CD8-positive, alpha-beta memory T cell (primary cell): ENCODE measurements at regions of chr4 and their contacts with region 1.

Region 1: GRCh38 chr4:1346781-1347409 is at the start of gene UVSSA:
- DNase-seq: peak; percentile 100
- H3K4me3 ChIP-seq: peak within 1 kb of the TSS; percentile 82
- H3K4me3 Mint-ChIP-seq: peak within 1 kb of the TSS; percentile 89 to 96 (median 95)
- H3K27ac ChIP-seq: peak within 1 kb of the TSS; percentile 90
- H3K27ac Mint-ChIP-seq: peak within 1 kb of the TSS; percentile 87 to 98 (median 96)
- H3K4me1 ChIP-seq: peaks cover 24% of the 10 kb centered on the region
- H3K4me1 Mint-ChIP-seq: peaks cover 37 to 53% (median 43%) of the 10 kb centered on the region in 3 donors
- H3K27me3 ChIP-seq: no peaks in the 10 kb centered on the region
- H3K27me3 Mint-ChIP-seq: peaks cover 0 to 2% of the 10 kb centered on the region in 2 donors
- total RNA-seq, gene UVSSA: 16.8 to 19.0 TPM

Region 2: DNA sequence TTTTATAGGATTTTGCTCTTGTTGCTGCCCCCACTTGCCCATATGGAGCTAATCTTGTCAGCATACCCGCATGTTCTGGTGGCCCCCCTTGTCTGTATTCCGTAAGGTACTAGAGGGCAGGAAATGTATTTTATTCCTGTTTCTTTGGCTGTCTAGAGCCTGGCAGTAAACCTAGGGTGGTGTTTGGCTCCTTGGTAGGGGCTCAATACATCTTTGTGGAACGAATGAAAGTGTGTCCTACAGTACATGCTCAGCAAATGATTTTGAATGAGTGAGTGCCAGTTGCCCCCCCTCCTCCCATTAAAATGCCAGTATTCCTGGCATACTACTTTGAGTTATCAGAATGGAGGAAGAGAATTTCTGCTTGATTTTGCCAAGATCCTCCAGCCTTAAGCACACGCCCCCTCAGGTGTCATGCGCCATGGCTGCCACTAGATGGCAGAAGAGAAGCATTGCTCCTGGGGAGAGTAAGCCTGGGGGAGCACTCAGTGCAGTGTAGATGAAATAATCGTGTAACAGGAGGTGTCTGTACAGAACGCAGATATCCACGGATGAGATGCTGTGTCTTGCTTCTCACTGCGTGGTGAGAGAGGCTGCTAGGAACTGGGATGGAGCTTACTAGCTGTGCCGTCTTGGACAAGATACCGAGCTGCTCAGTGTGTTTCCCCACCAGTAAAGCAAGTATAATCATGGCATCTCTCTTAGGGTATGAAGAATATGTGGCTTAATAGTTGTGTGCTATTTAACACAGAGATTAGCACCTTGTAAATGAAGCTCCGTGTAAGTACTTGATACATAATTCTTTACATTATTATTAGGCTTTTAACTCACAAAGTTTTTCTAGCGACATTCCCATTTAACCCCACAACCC is 216.3 kb before region 1 on chr4:
- CTCF ChIA-PET with region 1: interaction called, 20 read pairs
- POLR2A ChIA-PET with region 1: interaction called, 3 read pairs
- DNase-seq: peak; percentile 56 to 82 (median 70)
- H3K4me3 ChIP-seq: no peak overlapping the region
- H3K4me3 Mint-ChIP-seq: no peak overlapping the region
- H3K27ac ChIP-seq: no peak overlapping the region
- H3K27ac Mint-ChIP-seq: peak overlapping the region in 1 of 8 donors; percentile 75
- H3K4me1 ChIP-seq: peaks cover 4% of the 10 kb centered on the region
- H3K4me1 Mint-ChIP-seq: peaks cover 3 to 5% (median 5%) of the 10 kb centered on the region in 3 donors
- H3K27me3 ChIP-seq: no peaks in the 10 kb centered on the region
- H3K27me3 Mint-ChIP-seq: peaks cover 6 to 13% of the 10 kb centered on the region in 2 donors

Region 3: DNA sequence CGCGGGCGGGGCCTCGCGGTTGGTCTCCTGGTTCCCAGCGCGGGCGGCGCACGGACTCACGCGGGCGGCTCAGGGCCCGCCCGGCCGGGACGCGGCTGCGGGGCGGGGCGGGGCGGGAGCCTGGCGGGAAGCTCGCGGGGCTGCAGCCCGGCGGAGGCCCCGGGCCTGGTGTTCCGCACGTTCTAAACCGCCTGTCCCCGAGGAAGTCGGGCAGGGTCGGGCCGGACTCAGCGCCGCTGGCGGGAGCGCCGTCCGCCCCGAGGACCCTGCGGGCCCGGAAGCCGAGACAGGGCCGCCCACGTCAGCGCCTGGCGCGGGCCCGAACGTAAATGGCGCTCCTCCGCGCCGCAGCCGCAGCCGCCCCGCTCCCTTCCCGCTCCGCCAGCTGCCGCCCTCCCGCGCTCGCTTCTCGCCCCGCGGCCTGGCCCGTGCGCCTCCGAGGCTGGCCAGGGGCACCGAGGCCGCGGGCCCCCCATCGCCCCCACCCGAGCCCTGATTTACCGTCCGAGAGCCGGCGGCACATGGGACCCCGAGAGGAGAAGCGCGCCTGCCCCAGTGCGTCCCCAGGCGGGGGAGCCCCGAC is 97.7 kb before region 1 on chr4:
- CTCF ChIA-PET with region 1: interaction called, 28 read pairs
- POLR2A ChIA-PET with region 1: interaction called, 59 read pairs
- DNase-seq: peak; percentile 75 to 91 (median 87)
- H3K4me3 ChIP-seq: peak overlapping the region; percentile 74
- H3K4me3 Mint-ChIP-seq: peak overlapping the region; percentile 87 to 96 (median 90)
- H3K27ac ChIP-seq: peak overlapping the region; percentile 89
- H3K27ac Mint-ChIP-seq: peak overlapping the region; percentile 92 to 99 (median 94)
- H3K4me1 ChIP-seq: peaks cover 69% of the 10 kb centered on the region
- H3K4me1 Mint-ChIP-seq: peaks cover 58 to 74% (median 63%) of the 10 kb centered on the region in 3 donors
- H3K27me3 ChIP-seq: no peaks in the 10 kb centered on the region
- H3K27me3 Mint-ChIP-seq: peaks cover 0 to 3% of the 10 kb centered on the region in 2 donors

Region 4: GRCh38 chr4:1266881-1267763 is 79.8 kb before region 1 on chr4:
- CTCF ChIA-PET with region 1: interaction called, 15 read pairs
- POLR2A ChIA-PET with region 1: interaction called, 3 read pairs
- DNase-seq: peak in 2 of 5 donors; percentile 17 to 64
- H3K4me3 ChIP-seq: peak overlapping the region; percentile 58
- H3K4me3 Mint-ChIP-seq: peak overlapping the region; percentile 77 to 95 (median 83)
- H3K27ac ChIP-seq: peak overlapping the region; percentile 59
- H3K27ac Mint-ChIP-seq: peak overlapping the region; percentile 92 to 98 (median 95)
- H3K4me1 ChIP-seq: peaks cover 8% of the 10 kb centered on the region
- H3K4me1 Mint-ChIP-seq: peaks cover 10 to 15% (median 11%) of the 10 kb centered on the region in 3 donors
- H3K27me3 ChIP-seq: no peaks in the 10 kb centered on the region
- H3K27me3 Mint-ChIP-seq: peaks cover 0 to 2% of the 10 kb centered on the region in 2 donors

Region 5: GRCh38 chr4:1289207-1290164 is 57.4 kb before region 1 on chr4 and contains the start of gene MAEA:
- CTCF ChIA-PET with region 1: interaction called, 12 read pairs
- POLR2A ChIA-PET with region 1: interaction called, 12 read pairs
- DNase-seq: peak; percentile 94 to 98 (median 96)
- H3K4me3 ChIP-seq: peak within 1 kb of the TSS; percentile 88
- H3K4me3 Mint-ChIP-seq: peak within 1 kb of the TSS; percentile 89 to 99 (median 92)
- H3K27ac ChIP-seq: peak within 1 kb of the TSS; percentile 80
- H3K27ac Mint-ChIP-seq: peak within 1 kb of the TSS; percentile 91 to 98 (median 96)
- H3K4me1 ChIP-seq: peaks cover 39% of the 10 kb centered on the region
- H3K4me1 Mint-ChIP-seq: peaks cover 31 to 47% (median 42%) of the 10 kb centered on the region in 3 donors
- H3K27me3 ChIP-seq: no peaks in the 10 kb centered on the region
- H3K27me3 Mint-ChIP-seq: peaks cover 0 to 4% of the 10 kb centered on the region in 2 donors
- total RNA-seq, gene MAEA: 59.4 to 63.8 TPM

Region 6: GRCh38 chr4:1329408-1330371 is 17.2 kb before region 1 on chr4:
- CTCF ChIA-PET with region 1: interaction called, 12 read pairs
- POLR2A ChIA-PET with region 1: interaction called, 13 read pairs
- DNase-seq: peak; percentile 40 to 67 (median 53)
- H3K4me3 ChIP-seq: no peak overlapping the region
- H3K4me3 Mint-ChIP-seq: peak overlapping the region; percentile 67 to 89 (median 78)
- H3K27ac ChIP-seq: peak overlapping the region; percentile 38
- H3K27ac Mint-ChIP-seq: peak overlapping the region; percentile 83 to 100 (median 98)
- H3K4me1 ChIP-seq: peaks cover 37% of the 10 kb centered on the region
- H3K4me1 Mint-ChIP-seq: peaks cover 29 to 37% (median 34%) of the 10 kb centered on the region in 3 donors
- H3K27me3 ChIP-seq: no peaks in the 10 kb centered on the region
- H3K27me3 Mint-ChIP-seq: no peaks in the 10 kb centered on the region

Region 7: DNA sequence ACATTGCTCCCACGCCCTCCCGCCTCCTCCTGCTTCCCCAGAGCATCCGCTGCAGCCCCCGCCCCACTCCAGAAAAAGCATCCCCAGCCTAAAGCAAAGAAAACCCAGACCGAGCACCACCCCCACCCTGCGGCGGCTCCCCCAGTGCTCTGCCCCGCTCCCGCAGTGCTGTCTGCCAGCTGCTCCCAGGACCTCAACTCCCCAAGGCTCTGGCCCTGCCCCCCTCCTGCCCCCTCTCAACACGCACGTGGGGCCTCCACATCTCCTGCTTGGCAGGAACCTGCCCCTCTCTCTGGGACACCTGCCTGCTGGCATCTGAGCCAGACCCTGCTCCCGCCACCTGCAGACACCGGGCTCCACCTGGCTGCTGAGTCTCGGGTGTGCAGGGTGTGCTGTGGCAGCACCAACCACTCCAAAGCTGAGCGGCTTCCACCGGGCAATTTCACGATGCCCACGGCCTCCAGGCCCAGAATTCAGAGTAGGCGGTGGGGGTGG is 257.9 kb after region 1 on chr4:
- CTCF ChIA-PET with region 1: interaction called, 12 read pairs
- POLR2A ChIA-PET with region 1: no interaction called
- DNase-seq: peak in 3 of 5 donors; percentile 56 to 80 (median 59)
- H3K4me3 ChIP-seq: peak overlapping the region; percentile 37
- H3K4me3 Mint-ChIP-seq: peak overlapping the region; percentile 52 to 88 (median 80)
- H3K27ac ChIP-seq: peak overlapping the region; percentile 31
- H3K27ac Mint-ChIP-seq: peak overlapping the region in 5 of 8 donors; percentile 39 to 90 (median 84)
- H3K4me1 ChIP-seq: peaks cover 26% of the 10 kb centered on the region
- H3K4me1 Mint-ChIP-seq: peaks cover 16 to 38% (median 23%) of the 10 kb centered on the region in 3 donors
- H3K27me3 ChIP-seq: no peaks in the 10 kb centered on the region
- H3K27me3 Mint-ChIP-seq: no peaks in the 10 kb centered on the region